ENCODE measurements at regions of chr2 and their contacts with region 1.

Region 1: DNA sequence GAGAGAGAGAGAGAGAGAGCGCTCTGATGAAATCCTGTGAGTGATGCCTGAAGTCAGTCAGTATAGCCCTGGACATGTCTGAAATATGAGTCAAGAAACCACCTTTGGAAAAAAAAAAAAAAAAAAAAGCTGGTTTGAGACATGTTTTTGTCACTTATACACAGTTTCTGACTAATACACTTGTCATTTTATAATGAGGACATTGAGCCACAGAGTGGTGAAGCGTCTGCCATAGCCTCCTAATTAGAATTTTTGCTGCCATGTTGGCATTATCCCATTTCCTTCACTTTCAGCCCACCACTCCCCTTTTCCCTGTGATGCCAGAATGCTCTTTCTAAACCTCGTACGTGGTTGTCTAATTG is 15.7 kb upstream of the MYO3B start:
- DNase-seq: peak; percentile 87
- H3K4me3 ChIP-seq: no peak overlapping the region
- H3K27ac ChIP-seq: peak overlapping the region; percentile 46
- H3K4me1 ChIP-seq: peaks cover 19% of the 10 kb centered on the region
- H3K27me3 ChIP-seq: no peaks in the 10 kb centered on the region
- CTCF ChIP-seq: no peak

Region 2: DNA sequence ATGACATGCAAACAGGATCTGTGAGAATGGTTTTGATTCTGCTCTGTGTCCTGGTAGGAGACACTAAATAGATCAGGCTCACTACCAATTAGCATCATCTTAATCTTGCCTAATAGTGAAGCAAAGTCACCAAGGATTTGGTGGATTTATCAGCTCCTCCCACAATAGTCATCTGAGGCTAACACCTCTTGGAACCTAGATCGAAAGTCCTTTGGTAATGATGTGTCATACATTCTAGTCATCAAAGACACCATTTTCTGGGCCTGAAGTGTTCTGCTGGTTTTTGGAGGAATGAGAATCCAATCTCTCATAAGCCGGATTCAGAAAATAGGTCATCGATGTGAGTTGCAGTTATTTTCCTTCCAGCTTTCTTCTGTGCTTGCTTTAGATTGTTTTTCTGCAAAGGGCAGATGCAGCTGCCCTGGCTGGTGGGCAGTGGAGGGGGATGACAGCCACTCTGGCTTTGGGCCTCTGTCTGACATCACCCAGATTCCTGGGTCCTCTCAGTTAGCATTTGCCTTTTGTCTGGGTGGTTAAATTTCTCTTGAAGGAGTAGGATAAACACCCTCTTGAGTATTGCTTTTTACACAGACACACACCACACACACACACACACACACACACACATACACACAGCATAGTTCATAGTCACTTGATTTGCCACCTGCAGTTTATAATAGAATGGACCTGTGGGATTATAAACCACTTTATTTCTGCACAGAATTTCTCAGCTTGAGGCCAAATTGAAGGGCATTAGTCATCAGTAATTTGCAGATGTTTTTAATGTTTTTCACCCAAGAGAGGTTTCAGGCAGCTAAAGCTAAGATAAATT is 15.9 kb after region 1 on chr2 and contains the start of gene MYO3B:
- CTCF ChIA-PET with region 1: no interaction called
- dilution Hi-C with region 1: no loop called
- in situ Hi-C with region 1: no loop called
- intact Hi-C with region 1: loop called (anchors 1 kb)
- DNase-seq: no peak
- H3K4me3 ChIP-seq: no peak within 1 kb of the TSS
- H3K27ac ChIP-seq: no peak within 1 kb of the TSS
- H3K4me1 ChIP-seq: peaks cover 4% of the 10 kb centered on the region
- H3K27me3 ChIP-seq: no peaks in the 10 kb centered on the region
- CTCF ChIP-seq: no peak
- total RNA-seq, gene MYO3B: 0.24 TPM in 1 of 2 donors, not detected in the other